CD8-positive, alpha-beta memory T cell (primary cell): ENCODE measurements at regions of chr11 and their contacts with region 1.

Region 1: GRCh38 chr11:118240999-118241768 is 11.0 kb downstream of the MPZL3 start:
- DNase-seq: peak; percentile 36 to 82 (median 45)
- H3K4me3 ChIP-seq: peak overlapping the region; percentile 22
- H3K4me3 Mint-ChIP-seq: peak overlapping the region; percentile 51 to 87 (median 75)
- H3K27ac ChIP-seq: peak overlapping the region; percentile 64
- H3K27ac Mint-ChIP-seq: peak overlapping the region; percentile 88 to 96 (median 94)
- H3K4me1 ChIP-seq: peaks cover 50% of the 10 kb centered on the region
- H3K4me1 Mint-ChIP-seq: peaks cover 72 to 97% (median 90%) of the 10 kb centered on the region in 3 donors
- H3K27me3 ChIP-seq: no peaks in the 10 kb centered on the region
- H3K27me3 Mint-ChIP-seq: peaks cover 0 to 2% of the 10 kb centered on the region in 2 donors

Region 2: GRCh38 chr11:118251858-118252652 is 10.9 kb after region 1 on chr11 and contains the start of gene MPZL3:
- CTCF ChIA-PET with region 1: interaction called, 8 read pairs
- POLR2A ChIA-PET with region 1: interaction called, 12 read pairs
- DNase-seq: peak; percentile 69 to 93 (median 90)
- H3K4me3 ChIP-seq: peak within 1 kb of the TSS; percentile 90
- H3K4me3 Mint-ChIP-seq: peak within 1 kb of the TSS; percentile 97 to 99 (median 98)
- H3K27ac ChIP-seq: peak within 1 kb of the TSS; percentile 98
- H3K27ac Mint-ChIP-seq: peak within 1 kb of the TSS; percentile 98 to 100 (median 99)
- H3K4me1 ChIP-seq: peaks cover 27% of the 10 kb centered on the region
- H3K4me1 Mint-ChIP-seq: peaks cover 43 to 51% (median 50%) of the 10 kb centered on the region in 3 donors
- H3K27me3 ChIP-seq: no peaks in the 10 kb centered on the region
- H3K27me3 Mint-ChIP-seq: peaks cover 0 to 3% of the 10 kb centered on the region in 2 donors
- total RNA-seq, gene MPZL3: 113 to 119 TPM

Region 3: DNA sequence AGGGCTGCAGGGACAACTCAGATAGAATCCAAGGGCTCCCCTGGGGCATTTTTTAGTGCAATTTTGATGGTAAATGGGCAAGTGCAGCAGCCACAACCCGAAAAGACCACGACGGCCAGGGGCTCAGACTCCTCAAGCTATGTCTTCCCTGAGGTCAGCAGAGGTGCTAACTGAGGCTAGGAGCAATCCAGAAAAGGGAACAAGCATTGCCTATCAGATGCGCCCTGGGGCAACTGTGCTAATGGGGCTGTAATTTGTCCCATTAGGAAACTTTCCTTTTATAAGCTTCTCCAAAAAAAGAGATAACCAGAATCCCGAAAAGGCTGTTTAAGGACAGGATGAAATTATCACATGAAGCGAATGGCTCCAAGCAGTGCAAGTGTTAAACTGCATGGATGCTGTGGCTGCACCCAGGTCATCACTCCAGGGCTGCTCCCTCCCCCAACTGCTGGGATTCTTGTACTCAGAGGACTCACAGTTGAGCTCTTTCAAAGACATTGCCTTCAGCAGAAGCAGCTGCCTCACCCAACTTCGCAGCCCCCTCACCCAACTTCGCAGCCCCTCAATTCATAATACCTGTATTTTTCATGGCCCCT is 60.5 kb after region 1 on chr11:
- CTCF ChIA-PET with region 1: no interaction called
- POLR2A ChIA-PET with region 1: no interaction called
- DNase-seq: no peak
- H3K4me3 ChIP-seq: no peak overlapping the region
- H3K4me3 Mint-ChIP-seq: no peak overlapping the region
- H3K27ac ChIP-seq: no peak overlapping the region
- H3K27ac Mint-ChIP-seq: peak overlapping the region in 5 of 8 donors; percentile 47 to 82 (median 57)
- H3K4me1 ChIP-seq: peaks cover 30% of the 10 kb centered on the region
- H3K4me1 Mint-ChIP-seq: peaks cover 38 to 52% (median 44%) of the 10 kb centered on the region in 3 donors
- H3K27me3 ChIP-seq: no peaks in the 10 kb centered on the region
- H3K27me3 Mint-ChIP-seq: no peaks in the 10 kb centered on the region